ENCODE measurements at regions of chr1 and their contacts with region 1.

Region 1: GRCh38 chr1:19807697-19808096 is 7.4 kb downstream of the RNF186 start:
- DNase-seq: no peak
- ATAC-seq: no peak
- H3K4me3 ChIP-seq: no peak overlapping the region
- H3K27ac ChIP-seq: no peak overlapping the region
- H3K4me1 ChIP-seq: no peaks in the 10 kb centered on the region
- H3K27me3 ChIP-seq: no peaks in the 10 kb centered on the region
- CTCF ChIP-seq: no peak

Region 2: GRCh38 chr1:18429654-18430053 is 1378.0 kb before region 1 on chr1:
- CTCF ChIA-PET with region 1: no interaction called
- POLR2A ChIA-PET with region 1: no interaction called
- in situ Hi-C with region 1: no loop called
- intact Hi-C with region 1: no loop called
- DNase-seq: no peak
- ATAC-seq: no peak
- H3K4me3 ChIP-seq: no peak overlapping the region
- H3K27ac ChIP-seq: no peak overlapping the region
- H3K4me1 ChIP-seq: no peaks in the 10 kb centered on the region
- H3K27me3 ChIP-seq: peaks cover 6% of the 10 kb centered on the region
- CTCF ChIP-seq: no peak

Region 3: DNA sequence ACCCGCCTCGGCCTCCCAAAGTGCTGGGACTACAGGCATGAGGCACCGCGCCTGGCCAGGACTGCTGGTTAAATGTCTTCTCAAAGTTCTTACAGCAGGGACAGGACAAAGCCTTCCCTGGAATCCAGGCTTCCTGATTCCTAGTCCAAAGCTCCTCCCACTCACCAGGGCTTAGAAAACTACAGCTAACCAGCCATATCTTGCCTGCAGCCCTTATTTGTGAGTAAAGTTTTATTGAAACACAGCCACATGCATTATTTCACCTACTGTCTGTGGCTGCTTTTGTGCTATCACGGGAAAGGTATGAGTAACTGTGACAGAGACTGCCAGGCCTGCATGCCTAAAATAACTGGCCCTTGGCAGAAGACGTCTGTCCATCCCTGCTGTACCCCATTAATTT is 32.4 kb before region 1 on chr1:
- CTCF ChIA-PET with region 1: no interaction called
- POLR2A ChIA-PET with region 1: no interaction called
- in situ Hi-C with region 1: no loop called
- intact Hi-C with region 1: no loop called
- DNase-seq: no peak
- ATAC-seq: no peak
- H3K4me3 ChIP-seq: no peak overlapping the region
- H3K27ac ChIP-seq: no peak overlapping the region
- H3K4me1 ChIP-seq: no peaks in the 10 kb centered on the region
- H3K27me3 ChIP-seq: no peaks in the 10 kb centered on the region
- CTCF ChIP-seq: no peak

Region 4: DNA sequence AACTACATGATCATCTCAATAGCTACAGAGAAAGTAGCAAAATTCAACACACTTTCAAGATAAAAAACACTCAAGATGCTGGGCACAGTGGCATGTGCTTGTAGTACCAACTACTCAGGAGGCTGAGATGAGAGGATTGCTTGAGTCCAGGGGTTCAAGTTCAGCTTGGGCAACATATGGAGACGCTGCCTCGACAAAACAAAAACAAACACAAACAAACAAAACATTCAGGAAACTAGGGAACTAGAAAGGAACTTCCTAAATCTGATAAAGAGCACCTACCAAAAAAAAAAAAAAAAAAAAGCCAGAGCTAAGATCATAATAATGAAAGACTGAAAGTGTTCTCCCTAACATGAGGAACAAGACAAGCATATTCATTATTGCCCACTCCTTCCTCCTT is 30.2 kb after region 1 on chr1:
- CTCF ChIA-PET with region 1: no interaction called
- POLR2A ChIA-PET with region 1: interaction called, 12 read pairs
- in situ Hi-C with region 1: no loop called
- intact Hi-C with region 1: no loop called
- DNase-seq: no peak
- ATAC-seq: no peak
- H3K4me3 ChIP-seq: no peak overlapping the region
- H3K27ac ChIP-seq: no peak overlapping the region
- H3K4me1 ChIP-seq: no peaks in the 10 kb centered on the region
- H3K27me3 ChIP-seq: no peaks in the 10 kb centered on the region
- CTCF ChIP-seq: no peak

Region 5: DNA sequence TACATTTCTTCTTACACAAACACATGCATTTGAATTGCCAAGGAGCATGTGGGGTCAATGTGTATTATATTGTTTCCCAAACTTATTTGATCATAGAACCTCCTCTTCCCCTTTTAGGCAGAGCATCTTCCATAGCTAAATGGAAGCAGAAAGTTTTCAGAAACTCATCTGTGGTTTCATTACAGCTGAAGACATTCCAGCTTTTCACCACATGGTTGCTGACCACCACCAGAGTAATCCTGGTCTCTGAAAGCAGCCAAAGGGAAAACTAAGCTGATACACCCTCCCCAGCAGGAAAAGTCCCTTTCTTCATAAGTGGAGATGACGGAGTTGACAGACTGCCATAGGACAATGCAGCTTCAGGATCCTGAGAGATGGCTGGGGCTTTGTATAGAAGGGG is 44.3 kb after region 1 on chr1:
- CTCF ChIA-PET with region 1: no interaction called
- POLR2A ChIA-PET with region 1: no interaction called
- in situ Hi-C with region 1: no loop called
- intact Hi-C with region 1: no loop called
- DNase-seq: no peak
- ATAC-seq: no peak
- H3K4me3 ChIP-seq: no peak overlapping the region
- H3K27ac ChIP-seq: no peak overlapping the region
- H3K4me1 ChIP-seq: no peaks in the 10 kb centered on the region; the same call in 1 of the 2 replicates
- H3K27me3 ChIP-seq: no peaks in the 10 kb centered on the region
- CTCF ChIP-seq: no peak

Measured in Panc1 (cell line).